Caco-2 (cell line): ENCODE measurements at regions of chr20 and their contacts with region 1.

Region 1: GRCh38 chr20:36773597-36774390 is at the start of gene DSN1:
- DNase-seq: peak; percentile 100
- H3K4me3 ChIP-seq: peak within 1 kb of the TSS; percentile 81
- H3K4me3 Mint-ChIP-seq: peak within 1 kb of the TSS; percentile 80
- H3K27ac Mint-ChIP-seq: peak within 1 kb of the TSS; percentile 92
- H3K4me1 ChIP-seq: peaks cover 10% of the 10 kb centered on the region
- H3K4me1 Mint-ChIP-seq: peaks cover 19% of the 10 kb centered on the region
- H3K27me3 ChIP-seq: no peaks in the 10 kb centered on the region
- H3K27me3 Mint-ChIP-seq: no peaks in the 10 kb centered on the region
- CTCF ChIP-seq: no peak
- total RNA-seq, gene DSN1: 56.9 and 59.2 TPM in 2 replicates

Region 2: DNA sequence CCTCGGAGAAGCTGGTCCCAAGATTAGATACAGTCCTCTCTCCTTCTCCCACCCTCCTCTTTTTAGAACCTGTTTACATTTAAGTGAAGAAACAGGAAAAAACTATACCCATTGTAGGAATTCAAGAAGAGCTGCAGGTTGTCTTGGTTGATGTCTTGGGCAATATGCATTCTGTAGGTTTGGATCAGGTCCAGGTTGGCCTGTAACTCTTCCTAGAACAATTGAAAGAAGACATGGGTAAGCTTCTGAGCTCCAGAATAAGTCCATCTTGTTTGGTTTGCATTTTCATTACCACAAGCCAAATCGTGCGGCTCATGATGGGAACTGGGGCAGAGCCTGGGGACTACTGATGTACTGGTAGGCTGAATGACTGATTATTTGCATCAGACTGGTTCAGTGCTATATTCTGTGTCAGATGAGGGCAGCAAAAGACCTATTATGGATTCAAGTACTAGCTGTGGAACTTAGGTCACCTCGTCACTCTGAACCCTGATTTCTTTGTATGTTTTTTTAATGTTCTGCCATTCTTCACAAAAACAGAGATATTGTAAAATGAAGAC is 107.5 kb before region 1 on chr20:
- CTCF ChIA-PET with region 1: interaction called, 10 read pairs
- POLR2A ChIA-PET with region 1: interaction called, 4 read pairs
- intact Hi-C with region 1: no loop called
- DNase-seq: peak in 1 of 2 experiments; percentile 56
- H3K4me3 ChIP-seq: no peak overlapping the region
- H3K4me3 Mint-ChIP-seq: no peak overlapping the region
- H3K27ac Mint-ChIP-seq: no peak overlapping the region
- H3K4me1 ChIP-seq: peaks cover 7% of the 10 kb centered on the region
- H3K4me1 Mint-ChIP-seq: peaks cover 6% of the 10 kb centered on the region
- H3K27me3 ChIP-seq: no peaks in the 10 kb centered on the region
- H3K27me3 Mint-ChIP-seq: no peaks in the 10 kb centered on the region
- CTCF ChIP-seq: peak; percentile 24 to 52

Region 3: DNA sequence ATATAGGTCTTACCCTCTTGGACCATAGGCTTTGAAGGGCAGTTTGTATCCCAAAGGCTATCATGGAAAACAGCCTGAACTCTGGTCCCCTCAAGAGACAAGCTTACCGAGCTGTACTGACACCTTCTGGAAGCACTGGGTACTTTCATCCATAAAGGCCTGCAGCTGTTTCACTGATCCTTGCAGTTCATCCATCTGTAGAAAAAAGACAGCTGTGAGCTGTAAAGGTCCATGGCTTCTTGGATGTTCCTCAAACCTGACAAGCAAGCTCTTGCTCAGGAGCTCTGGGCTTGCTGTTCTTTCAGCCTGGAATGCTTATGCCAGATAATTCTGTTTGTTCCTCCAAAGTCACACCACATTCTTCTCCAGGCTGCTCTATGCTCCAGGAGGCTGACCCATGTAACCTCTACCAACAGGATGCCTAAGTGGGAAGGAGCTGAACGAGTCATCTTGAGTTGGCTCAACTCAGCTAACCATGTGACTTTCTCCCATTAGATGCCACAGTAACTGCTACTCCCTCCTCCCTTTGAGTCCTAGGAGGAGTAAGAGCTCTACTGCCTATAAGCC is 19.1 kb before region 1 on chr20:
- CTCF ChIA-PET with region 1: interaction called, 45 read pairs
- POLR2A ChIA-PET with region 1: interaction called, 23 read pairs
- intact Hi-C with region 1: loop called (anchors 1 kb)
- DNase-seq: peak; percentile 86 to 89
- H3K4me3 ChIP-seq: no peak overlapping the region
- H3K4me3 Mint-ChIP-seq: no peak overlapping the region
- H3K27ac Mint-ChIP-seq: peak overlapping the region; percentile 10
- H3K4me1 ChIP-seq: peaks cover 5% of the 10 kb centered on the region
- H3K4me1 Mint-ChIP-seq: peaks cover 12% of the 10 kb centered on the region
- H3K27me3 ChIP-seq: no peaks in the 10 kb centered on the region
- H3K27me3 Mint-ChIP-seq: no peaks in the 10 kb centered on the region
- CTCF ChIP-seq: peak; percentile 96 to 97

Region 4: DNA sequence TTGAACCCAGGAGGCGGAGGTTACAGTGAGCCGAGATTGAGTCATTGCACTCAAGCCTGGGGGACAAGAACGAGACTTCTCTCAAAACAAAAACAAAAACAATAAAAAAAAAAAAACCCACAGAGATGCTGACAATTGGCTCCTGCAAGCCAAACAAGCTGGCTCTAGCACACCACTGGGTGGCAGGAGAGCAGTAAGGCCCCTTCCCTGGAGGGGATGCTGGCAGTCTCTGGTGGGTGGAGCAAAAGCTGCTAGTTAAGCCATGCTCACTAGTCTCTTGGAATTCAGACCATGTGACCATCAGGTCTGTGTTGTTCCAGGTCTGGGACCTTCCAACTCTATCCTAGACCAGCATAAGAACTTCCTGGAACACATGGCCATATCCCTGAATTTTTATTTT is 18.6 kb after region 1 on chr20:
- CTCF ChIA-PET with region 1: interaction called, 18 read pairs
- POLR2A ChIA-PET with region 1: interaction called, 6 read pairs
- intact Hi-C with region 1: no loop called
- DNase-seq: peak; percentile 94 to 95
- H3K4me3 ChIP-seq: no peak overlapping the region
- H3K4me3 Mint-ChIP-seq: no peak overlapping the region
- H3K27ac Mint-ChIP-seq: no peak overlapping the region
- H3K4me1 ChIP-seq: no peaks in the 10 kb centered on the region
- H3K4me1 Mint-ChIP-seq: no peaks in the 10 kb centered on the region
- H3K27me3 ChIP-seq: no peaks in the 10 kb centered on the region
- H3K27me3 Mint-ChIP-seq: no peaks in the 10 kb centered on the region
- CTCF ChIP-seq: peak; percentile 67 to 92

Region 5: DNA sequence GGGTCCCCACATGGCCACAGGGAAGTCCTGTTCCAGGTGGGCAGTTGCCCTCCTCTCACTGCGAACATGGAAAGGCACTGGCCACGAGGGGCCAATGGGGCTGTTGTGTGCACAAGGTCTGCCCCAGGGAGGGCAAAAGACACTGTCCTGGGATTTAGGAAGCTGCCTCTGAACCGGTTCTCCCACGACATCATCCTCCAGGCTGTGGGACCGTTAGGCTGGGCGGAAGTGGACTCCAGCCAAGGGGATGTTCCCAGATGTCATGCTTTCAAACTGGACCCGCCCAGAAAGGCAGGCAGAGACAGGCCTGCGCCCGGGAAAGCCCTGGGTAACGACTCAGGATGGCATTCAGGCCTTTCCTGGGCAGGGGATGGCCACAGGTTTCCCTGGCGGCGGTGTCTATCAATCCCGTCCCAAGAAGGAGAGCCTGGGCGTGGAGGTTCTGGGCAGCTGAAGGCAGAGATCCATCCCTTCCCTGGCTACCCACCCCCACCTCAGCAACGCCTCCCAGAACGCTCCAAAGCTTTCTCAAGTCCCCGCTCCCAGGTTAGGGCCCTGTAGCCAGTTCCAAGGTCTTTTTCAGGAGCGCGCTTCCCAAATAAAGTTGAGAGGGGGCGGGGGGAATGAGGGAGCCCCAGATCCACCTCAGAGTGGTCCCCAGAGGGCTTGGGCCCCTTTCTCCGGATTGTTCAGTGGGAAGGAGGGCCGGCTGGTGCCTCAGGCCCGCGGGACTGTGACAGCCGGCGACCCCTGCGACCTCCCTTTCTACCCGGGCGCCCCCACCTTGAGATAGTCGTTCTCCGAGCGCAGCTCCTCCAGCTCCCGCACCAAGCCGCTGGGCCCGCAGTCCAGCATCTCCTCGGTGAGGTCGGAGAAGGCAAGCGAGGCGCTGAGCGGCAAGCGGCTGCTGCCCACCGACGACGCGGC is 88.3 kb after region 1 on chr20:
- CTCF ChIA-PET with region 1: interaction called, 14 read pairs
- POLR2A ChIA-PET with region 1: no interaction called
- intact Hi-C with region 1: no loop called
- DNase-seq: peak in 1 of 2 experiments; percentile 47
- H3K4me3 ChIP-seq: peak overlapping the region; percentile 51
- H3K4me3 Mint-ChIP-seq: peak overlapping the region; percentile 50
- H3K27ac Mint-ChIP-seq: no peak overlapping the region
- H3K4me1 ChIP-seq: peaks cover 16% of the 10 kb centered on the region
- H3K4me1 Mint-ChIP-seq: peaks cover 13% of the 10 kb centered on the region
- H3K27me3 ChIP-seq: no peaks in the 10 kb centered on the region
- H3K27me3 Mint-ChIP-seq: no peaks in the 10 kb centered on the region
- CTCF ChIP-seq: no peak